ENCODE measurements at regions of chr9 and their contacts with region 1.

Region 1: DNA sequence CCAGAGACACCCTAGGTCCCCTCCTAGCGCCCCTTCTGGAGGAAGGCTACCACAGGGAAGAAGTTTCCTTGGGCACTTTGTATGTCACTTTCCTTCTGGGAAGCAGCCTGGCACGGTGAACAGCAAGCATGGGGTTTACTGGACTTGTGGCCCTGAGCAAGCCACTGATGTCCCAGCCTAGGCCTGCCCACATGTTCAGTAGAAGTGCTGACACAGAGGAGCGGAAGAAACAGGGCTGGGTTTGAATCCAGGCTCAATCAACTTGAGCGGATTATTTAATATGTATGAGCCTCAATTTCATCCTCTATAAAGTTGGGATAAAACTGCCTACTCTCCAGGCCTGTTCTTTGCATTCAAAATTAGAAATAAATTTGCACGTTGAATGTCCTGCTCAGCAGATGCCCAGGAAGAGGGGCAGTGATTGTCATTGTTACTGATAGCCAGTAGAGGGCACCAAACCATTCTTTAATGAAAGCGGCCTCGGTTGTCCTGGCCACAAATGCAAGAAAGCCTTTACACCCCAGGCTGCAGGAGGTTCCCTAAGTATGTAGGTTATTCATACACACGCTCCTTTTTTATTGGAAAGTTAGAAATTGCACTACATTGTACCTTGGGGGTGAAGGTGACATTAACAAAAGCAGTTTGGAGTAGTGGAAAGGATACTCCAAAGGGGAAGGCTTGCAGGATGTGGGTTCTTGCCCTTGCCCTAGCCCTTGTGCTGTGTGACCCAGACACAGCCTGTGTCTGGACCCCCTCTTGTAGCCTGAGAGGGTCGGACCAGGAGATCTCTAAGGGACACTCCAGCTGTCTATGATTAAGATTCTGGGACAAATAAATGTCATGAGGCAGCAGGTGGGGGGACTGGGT is 13.4 kb upstream of the XPA start:
- DNase-seq: peak; percentile 25
- H3K4me3 Mint-ChIP-seq: no peak overlapping the region
- H3K27ac Mint-ChIP-seq: no peak overlapping the region
- H3K4me1 Mint-ChIP-seq: peaks cover 28% of the 10 kb centered on the region
- H3K27me3 Mint-ChIP-seq: peaks cover 25% of the 10 kb centered on the region

Region 2: DNA sequence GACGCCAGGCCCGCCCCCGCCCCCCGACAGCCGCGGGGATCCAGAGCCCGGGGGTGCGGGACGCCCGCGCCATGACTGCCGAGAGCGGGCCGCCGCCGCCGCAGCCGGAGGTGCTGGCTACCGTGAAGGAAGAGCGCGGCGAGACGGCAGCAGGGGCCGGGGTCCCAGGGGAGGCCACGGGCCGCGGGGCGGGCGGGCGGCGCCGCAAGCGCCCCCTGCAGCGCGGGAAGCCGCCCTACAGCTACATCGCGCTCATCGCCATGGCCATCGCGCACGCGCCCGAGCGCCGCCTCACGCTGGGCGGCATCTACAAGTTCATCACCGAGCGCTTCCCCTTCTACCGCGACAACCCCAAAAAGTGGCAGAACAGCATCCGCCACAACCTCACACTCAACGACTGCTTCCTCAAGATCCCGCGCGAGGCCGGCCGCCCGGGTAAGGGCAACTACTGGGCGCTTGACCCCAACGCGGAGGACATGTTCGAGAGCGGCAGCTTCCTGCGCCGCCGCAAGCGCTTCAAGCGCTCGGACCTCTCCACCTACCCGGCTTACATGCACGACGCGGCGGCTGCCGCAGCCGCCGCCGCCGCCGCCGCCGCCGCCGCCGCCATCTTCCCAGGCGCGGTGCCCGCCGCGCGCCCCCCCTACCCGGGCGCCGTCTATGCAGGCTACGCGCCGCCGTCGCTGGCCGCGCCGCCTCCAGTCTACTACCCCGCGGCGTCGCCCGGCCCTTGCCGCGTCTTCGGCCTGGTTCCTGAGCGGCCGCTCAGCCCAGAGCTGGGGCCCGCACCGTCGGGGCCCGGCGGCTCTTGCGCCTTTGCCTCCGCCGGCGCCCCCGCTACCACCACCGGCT is 143.5 kb after region 1 on chr9:
- intact Hi-C with region 1: loop called (anchors 5 kb)
- DNase-seq: peak; percentile 61
- H3K4me3 Mint-ChIP-seq: peak overlapping the region; percentile 86
- H3K27ac Mint-ChIP-seq: no peak overlapping the region
- H3K4me1 Mint-ChIP-seq: peaks cover 16% of the 10 kb centered on the region
- H3K27me3 Mint-ChIP-seq: peaks cover 78% of the 10 kb centered on the region

Region 3: DNA sequence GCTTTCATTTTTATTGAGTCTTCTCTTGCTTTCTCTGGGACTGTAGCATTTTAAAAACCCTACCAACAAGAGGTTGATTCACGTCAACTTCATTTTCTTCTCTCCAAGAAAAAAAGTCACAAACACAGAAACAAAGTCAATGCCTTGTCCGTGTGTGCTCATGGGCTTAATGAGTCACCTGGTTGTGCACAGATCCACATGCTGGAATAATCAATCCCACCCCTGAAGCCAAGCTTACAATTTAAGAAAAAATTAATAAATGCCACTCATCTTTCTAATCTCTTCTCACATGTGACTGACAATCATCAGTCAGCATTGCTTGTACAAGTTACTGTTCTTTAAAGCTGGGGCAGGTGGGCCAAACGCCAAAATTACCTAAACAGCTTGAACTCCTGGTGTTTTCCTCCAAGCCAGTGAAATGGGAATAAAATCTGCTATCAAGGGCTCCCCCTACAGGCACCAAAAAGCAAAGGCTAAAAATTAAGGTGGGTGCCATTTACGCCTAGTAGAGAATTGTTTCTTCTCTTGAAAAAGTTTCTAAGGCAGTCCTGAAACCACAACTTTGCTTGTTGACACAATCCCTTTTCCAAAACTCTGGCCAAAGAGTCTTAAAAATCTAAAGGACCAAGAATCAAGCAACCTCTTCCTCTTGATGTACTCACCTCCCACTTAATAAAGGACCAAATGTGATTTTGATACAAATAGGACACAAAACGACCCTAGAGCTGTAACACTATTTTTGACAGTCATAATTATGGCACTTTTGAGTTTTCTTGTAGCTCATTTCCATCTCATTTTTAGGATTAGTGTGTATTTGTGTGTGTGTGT is 190.4 kb after region 1 on chr9:
- intact Hi-C with region 1: loop called (anchors 2 kb)
- DNase-seq: no peak
- H3K4me3 Mint-ChIP-seq: no peak overlapping the region
- H3K27ac Mint-ChIP-seq: no peak overlapping the region
- H3K4me1 Mint-ChIP-seq: peaks cover 35% of the 10 kb centered on the region
- H3K27me3 Mint-ChIP-seq: no peaks in the 10 kb centered on the region

Region 4: DNA sequence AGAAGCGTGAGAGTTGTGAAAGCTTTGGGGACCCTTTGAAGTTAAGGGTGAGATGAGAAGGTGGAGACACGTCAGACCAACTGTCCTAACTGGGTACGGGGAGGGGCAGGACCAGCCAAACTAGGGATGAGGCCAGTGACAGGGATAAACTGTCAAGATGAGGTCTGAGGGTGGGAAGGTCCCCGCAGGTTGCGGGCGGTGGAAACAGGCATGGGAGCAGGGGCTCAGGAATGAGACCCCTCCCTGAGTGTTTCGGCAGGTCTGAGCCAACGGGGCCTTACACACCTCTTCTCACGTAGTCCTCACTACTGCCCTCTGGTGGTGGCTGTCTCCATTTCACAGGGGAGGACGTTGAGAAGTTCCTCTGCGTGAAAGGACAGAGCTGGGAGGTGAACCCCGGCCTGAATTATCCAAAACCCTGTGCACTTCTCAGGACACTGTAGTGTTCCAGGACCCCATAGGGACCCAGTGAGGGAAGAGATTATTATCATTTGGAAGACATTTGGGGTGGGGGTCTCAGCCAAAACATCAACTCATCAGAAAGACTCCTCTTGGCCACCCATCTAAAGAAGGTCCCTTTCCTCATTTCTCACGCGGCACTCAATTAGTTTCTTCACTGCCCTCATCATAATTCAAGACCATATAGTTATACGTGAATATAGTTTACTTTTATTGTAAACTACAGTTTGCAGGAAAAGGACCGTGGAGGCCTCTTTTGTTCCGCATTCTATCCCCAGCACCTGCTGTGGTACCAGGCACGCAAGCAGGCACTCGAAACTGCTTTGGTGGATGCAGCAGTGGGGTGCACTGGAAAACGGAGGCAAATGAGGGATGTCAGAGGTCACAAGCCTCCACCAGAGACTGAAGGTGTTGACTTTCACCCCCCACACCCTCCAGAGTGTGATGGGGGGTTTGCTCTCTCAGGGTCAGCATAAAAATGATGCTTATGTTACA is 324.3 kb after region 1 on chr9:
- intact Hi-C with region 1: loop called (anchors 2 kb)
- DNase-seq: peak; percentile 78
- H3K4me3 Mint-ChIP-seq: no peak overlapping the region
- H3K27ac Mint-ChIP-seq: peak overlapping the region; percentile 67
- H3K4me1 Mint-ChIP-seq: peaks cover 7% of the 10 kb centered on the region
- H3K27me3 Mint-ChIP-seq: no peaks in the 10 kb centered on the region